Right ventricle myocardium inferior (tissue), 1 donor: ENCODE measurements at regions of chr4 and their contacts with region 1.

Region 1: GRCh38 chr4:152500800-152501434 is 35.0 kb downstream of the FBXW7 start:
- DNase-seq: no peak
- ATAC-seq: no peak

Region 2: GRCh38 chr4:152735396-152735859 is 234.5 kb after region 1 on chr4:
- intact Hi-C with region 1: loop called (anchors 1 kb)
- DNase-seq: no peak
- ATAC-seq: no peak